ENCODE measurements at regions of chr11 and their contacts with region 1.

Region 1: GRCh38 chr11:106156290-106156937 is 79.0 kb downstream of the AASDHPPT start:
- DNase-seq: peak; percentile 58
- H3K4me3 ChIP-seq: no peak overlapping the region
- H3K27ac ChIP-seq: no peak overlapping the region
- H3K4me1 ChIP-seq: peaks cover 23% of the 10 kb centered on the region
- H3K27me3 ChIP-seq: no peaks in the 10 kb centered on the region
- CTCF ChIP-seq: peak; percentile 40 to 63

Region 2: GRCh38 chr11:106087815-106088435 is 68.5 kb before region 1 on chr11:
- CTCF ChIA-PET with region 1: no interaction called
- dilution Hi-C with region 1: no loop called
- in situ Hi-C with region 1: no loop called
- intact Hi-C with region 1: loop called (anchors 2 kb)
- DNase-seq: peak; percentile 37
- H3K4me3 ChIP-seq: no peak overlapping the region
- H3K27ac ChIP-seq: no peak overlapping the region
- H3K4me1 ChIP-seq: no peaks in the 10 kb centered on the region
- H3K27me3 ChIP-seq: no peaks in the 10 kb centered on the region
- CTCF ChIP-seq: peak; percentile 87 to 94

Region 3: DNA sequence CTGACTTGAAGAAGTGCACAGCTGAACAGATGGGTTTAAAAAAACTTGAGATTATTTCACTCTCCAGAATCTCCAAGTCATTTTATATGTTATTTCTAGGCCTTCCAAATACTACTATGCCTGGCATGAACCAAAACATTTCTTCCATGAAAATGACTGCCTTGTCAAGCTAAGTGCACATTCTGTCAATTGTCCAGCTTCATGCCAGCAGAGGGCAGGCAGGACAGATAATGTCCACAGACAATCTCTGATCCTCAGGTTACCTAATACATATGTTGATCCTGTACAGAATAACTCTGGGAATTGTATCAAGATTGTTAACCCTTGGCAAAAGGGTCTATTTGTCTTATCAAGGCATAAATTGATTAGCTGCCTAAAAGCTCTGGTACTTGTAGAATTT is 150.5 kb after region 1 on chr11:
- CTCF ChIA-PET with region 1: no interaction called
- dilution Hi-C with region 1: no loop called
- in situ Hi-C with region 1: no loop called
- intact Hi-C with region 1: loop called (anchors 2 kb)
- DNase-seq: no peak
- H3K4me3 ChIP-seq: no peak overlapping the region
- H3K27ac ChIP-seq: no peak overlapping the region
- H3K4me1 ChIP-seq: no peaks in the 10 kb centered on the region
- H3K27me3 ChIP-seq: no peaks in the 10 kb centered on the region
- CTCF ChIP-seq: peak; percentile 13 to 25

Region 4: GRCh38 chr11:106473089-106473722 is 316.8 kb after region 1 on chr11:
- CTCF ChIA-PET with region 1: no interaction called
- dilution Hi-C with region 1: no loop called
- in situ Hi-C with region 1: no loop called
- intact Hi-C with region 1: loop called (anchors 10 kb)
- DNase-seq: no peak
- H3K4me3 ChIP-seq: no peak overlapping the region
- H3K27ac ChIP-seq: no peak overlapping the region
- H3K4me1 ChIP-seq: peaks cover 14% of the 10 kb centered on the region
- H3K27me3 ChIP-seq: no peaks in the 10 kb centered on the region
- CTCF ChIP-seq: no peak

Region 5: GRCh38 chr11:106706355-106706754 is 549.9 kb after region 1 on chr11:
- CTCF ChIA-PET with region 1: no interaction called
- dilution Hi-C with region 1: no loop called
- in situ Hi-C with region 1: no loop called
- intact Hi-C with region 1: loop called (anchors 10 kb)
- DNase-seq: peak; percentile 86
- H3K4me3 ChIP-seq: no peak overlapping the region
- H3K27ac ChIP-seq: peak overlapping the region; percentile 40
- H3K4me1 ChIP-seq: peaks cover 4% of the 10 kb centered on the region
- H3K27me3 ChIP-seq: peaks cover 1% of the 10 kb centered on the region
- CTCF ChIP-seq: no peak

Measured in mammary epithelial cell (primary cell).